GM12878 (cell line): ENCODE measurements at regions of chr5 and their contacts with region 1.

Region 1: GRCh38 chr5:169701910-169702451 is 64.9 kb downstream of the DOCK2 start:
- DNase-seq: no peak
- ATAC-seq: no peak
- H3K4me3 ChIP-seq: no peak overlapping the region
- H3K27ac ChIP-seq: peak overlapping the region; percentile 89
- H3K4me1 ChIP-seq: peaks cover 51% of the 10 kb centered on the region
- H3K27me3 ChIP-seq: no peaks in the 10 kb centered on the region
- CTCF ChIP-seq: peak; percentile 30 to 50 (median 39); a peak in 4 of 6 replicates
- EP300 ChIP-seq: no peak
- POLR2A ChIP-seq: no peak
- RAD21 ChIP-seq: peak; percentile 54

Region 2: GRCh38 chr5:169670769-169671525 is 31.0 kb before region 1 on chr5:
- CTCF ChIA-PET with region 1: interaction called, 12 read pairs
- POLR2A ChIA-PET with region 1: interaction called, 4 read pairs
- RAD21 ChIA-PET with region 1: interaction called, 23 read pairs
- SMC1A ChIA-PET with region 1: interaction called, 29 read pairs
- in situ Hi-C with region 1: no loop called
- intact Hi-C with region 1: no loop called
- DNase-seq: peak; percentile 80
- ATAC-seq: peak; percentile 98
- H3K4me3 ChIP-seq: peak overlapping the region; percentile 42; the same call in 1 of the 2 replicates
- H3K27ac ChIP-seq: peak overlapping the region; percentile 95
- H3K4me1 ChIP-seq: peaks cover 33% of the 10 kb centered on the region
- H3K27me3 ChIP-seq: no peaks in the 10 kb centered on the region
- CTCF ChIP-seq: no peak
- EP300 ChIP-seq: peak; percentile 67 to 69; a peak in 3 of 4 replicates
- POLR2A ChIP-seq: no peak
- RAD21 ChIP-seq: peak; percentile 20; the same call in 1 of the 2 replicates

Region 3: DNA sequence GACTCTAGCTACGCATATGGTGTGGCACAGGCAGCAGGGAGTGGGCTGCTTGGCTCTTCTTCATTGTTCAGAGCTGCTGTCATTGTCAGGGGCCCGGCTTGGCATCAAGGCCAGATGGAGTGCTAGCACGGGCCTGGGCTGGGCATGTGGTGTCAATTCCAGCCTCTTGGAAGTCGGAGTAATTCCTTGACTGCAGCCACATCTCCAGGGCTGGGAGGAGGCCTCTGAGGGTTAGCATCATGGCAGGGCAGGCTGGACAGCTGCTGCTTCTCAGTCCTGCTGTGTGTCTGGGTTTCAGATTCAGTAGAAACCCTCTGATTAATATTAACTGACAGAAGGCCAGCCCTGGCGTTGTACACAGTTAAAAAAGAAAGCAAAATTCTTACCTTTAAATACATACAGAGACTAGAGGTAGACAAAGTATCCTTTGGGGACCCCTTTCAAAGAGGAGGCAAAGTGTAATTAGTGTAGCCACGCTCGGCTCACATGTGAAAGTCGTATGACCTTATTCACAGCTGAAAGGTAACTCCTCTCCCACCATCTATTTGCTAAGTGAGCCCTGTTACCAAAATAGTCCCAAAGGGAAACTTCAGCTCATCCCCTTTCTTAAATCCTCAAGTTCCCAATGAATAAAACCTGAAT is 61.5 kb after region 1 on chr5:
- CTCF ChIA-PET with region 1: interaction called, 5 read pairs
- POLR2A ChIA-PET with region 1: interaction called, 4 read pairs
- RAD21 ChIA-PET with region 1: interaction called, 30 read pairs
- SMC1A ChIA-PET with region 1: interaction called, 17 read pairs
- in situ Hi-C with region 1: no loop called
- intact Hi-C with region 1: loop called (anchors 1 kb)
- DNase-seq: peak; percentile 45
- ATAC-seq: peak; percentile 87
- H3K4me3 ChIP-seq: no peak overlapping the region
- H3K27ac ChIP-seq: no peak overlapping the region
- H3K4me1 ChIP-seq: peaks cover 5% of the 10 kb centered on the region; the same call in 1 of the 2 replicates
- H3K27me3 ChIP-seq: no peaks in the 10 kb centered on the region
- CTCF ChIP-seq: no peak
- EP300 ChIP-seq: 0 out of 4 replicates have a peak, but pooled peaks of 1 of the 2 experiments have one; percentile 19
- POLR2A ChIP-seq: no peak
- RAD21 ChIP-seq: no peak

Region 4: DNA sequence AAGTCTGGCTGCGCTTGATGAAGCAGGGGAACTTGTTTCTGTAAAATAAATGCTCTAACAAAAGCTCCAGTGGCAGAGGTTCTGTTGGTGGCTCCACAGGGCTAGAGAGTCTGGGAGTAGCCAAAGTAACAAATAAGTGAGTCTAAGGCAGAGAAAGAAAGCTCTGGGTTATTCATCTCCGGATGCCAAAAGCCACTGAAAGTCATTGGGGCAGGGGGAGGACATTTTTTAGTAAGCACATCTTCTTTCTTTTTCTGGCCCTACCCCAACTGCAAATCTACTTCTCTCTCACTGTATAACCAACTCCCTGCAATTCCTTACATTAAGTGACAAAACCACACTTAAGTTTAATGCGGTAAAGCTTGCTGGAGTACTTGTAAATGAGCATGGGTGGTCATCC is 136.7 kb after region 1 on chr5:
- CTCF ChIA-PET with region 1: interaction called, 3 read pairs
- POLR2A ChIA-PET with region 1: interaction called, 3 read pairs
- RAD21 ChIA-PET with region 1: interaction called, 6 read pairs
- SMC1A ChIA-PET with region 1: interaction called, 4 read pairs
- in situ Hi-C with region 1: no loop called
- intact Hi-C with region 1: loop called (anchors 5 kb)
- DNase-seq: peak; percentile 45
- ATAC-seq: peak; percentile 92
- H3K4me3 ChIP-seq: no peak overlapping the region
- H3K27ac ChIP-seq: peak overlapping the region; percentile 76
- H3K4me1 ChIP-seq: peaks cover 28% of the 10 kb centered on the region
- H3K27me3 ChIP-seq: no peaks in the 10 kb centered on the region
- CTCF ChIP-seq: no peak
- EP300 ChIP-seq: no peak; a peak in 1 of 4 replicates
- POLR2A ChIP-seq: no peak
- RAD21 ChIP-seq: no peak

Region 5: GRCh38 chr5:170070556-170071412 is 368.8 kb after region 1 on chr5:
- CTCF ChIA-PET with region 1: interaction called, 6 read pairs
- POLR2A ChIA-PET with region 1: no interaction called
- RAD21 ChIA-PET with region 1: no interaction called
- SMC1A ChIA-PET with region 1: no interaction called
- in situ Hi-C with region 1: no loop called
- intact Hi-C with region 1: loop called (anchors 10 kb)
- DNase-seq: no peak
- ATAC-seq: 0 out of 3 replicates have a peak, but pooled peaks have one; percentile 14
- H3K4me3 ChIP-seq: no peak overlapping the region
- H3K27ac ChIP-seq: no peak overlapping the region
- H3K4me1 ChIP-seq: no peaks in the 10 kb centered on the region; the same call in 1 of the 2 replicates
- H3K27me3 ChIP-seq: no peaks in the 10 kb centered on the region
- CTCF ChIP-seq: peak; percentile 15 to 51 (median 44); a peak in 4 of 6 replicates
- EP300 ChIP-seq: no peak
- POLR2A ChIP-seq: no peak
- RAD21 ChIP-seq: no peak